Activated CD4-positive, alpha-beta T cell treated with anti-CD3 and anti-CD28 coated beads for 36 hours (primary cell): ENCODE measurements at regions of chr19 and their contacts with region 1.

Region 1: GRCh38 chr19:42219812-42220750 is at the start of gene ZNF526:
- DNase-seq: peak; percentile 98
- ATAC-seq: peak; percentile 83
- H3K4me3 Mint-ChIP-seq: peak within 1 kb of the TSS; percentile 85
- H3K27ac Mint-ChIP-seq: peak within 1 kb of the TSS; percentile 90
- H3K4me1 Mint-ChIP-seq: peaks cover 50% of the 10 kb centered on the region
- H3K27me3 Mint-ChIP-seq: no peaks in the 10 kb centered on the region
- total RNA-seq, gene ZNF526: 11.9 to 15.2 TPM

Region 2: GRCh38 chr19:41883821-41884733 is 336.0 kb before region 1 on chr19:
- CTCF ChIA-PET with region 1: no interaction called
- POLR2A ChIA-PET with region 1: no interaction called
- intact Hi-C with region 1: loop called in 1 of 2 experiments (anchors 10 kb)
- DNase-seq: peak; percentile 94
- ATAC-seq: peak; percentile 75
- H3K4me3 Mint-ChIP-seq: peak overlapping the region; percentile 68
- H3K27ac Mint-ChIP-seq: peak overlapping the region; percentile 96
- H3K4me1 Mint-ChIP-seq: peaks cover 54% of the 10 kb centered on the region
- H3K27me3 Mint-ChIP-seq: no peaks in the 10 kb centered on the region

Region 3: DNA sequence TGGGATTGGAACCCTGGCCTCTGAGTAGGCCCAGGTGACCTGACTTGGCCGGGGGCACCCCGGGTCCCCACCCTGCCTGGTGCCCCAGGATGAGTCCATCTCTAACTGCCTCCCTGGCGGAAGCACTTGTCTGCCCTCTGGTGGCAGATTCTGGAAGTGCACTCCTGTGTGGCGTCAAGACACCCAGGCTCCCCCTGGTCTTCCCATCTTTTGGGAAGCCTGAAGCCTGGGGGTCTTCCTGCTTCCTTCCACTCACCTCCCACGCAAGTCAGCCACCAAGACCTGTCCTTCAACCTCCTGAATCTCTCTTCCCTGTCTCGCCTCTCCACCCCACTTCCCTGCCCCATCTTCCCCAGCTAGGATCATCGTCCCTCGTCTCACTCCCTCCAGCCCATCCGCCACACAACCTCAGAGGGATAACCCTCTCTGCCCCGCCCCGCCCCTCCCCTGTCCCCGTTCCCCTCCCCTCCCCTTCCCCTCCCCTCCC is 268.4 kb before region 1 on chr19:
- CTCF ChIA-PET with region 1: no interaction called
- POLR2A ChIA-PET with region 1: no interaction called
- intact Hi-C with region 1: no loop called
- DNase-seq: peak; percentile 94
- ATAC-seq: peak; percentile 90
- H3K4me3 Mint-ChIP-seq: no peak overlapping the region
- H3K27ac Mint-ChIP-seq: peak overlapping the region; percentile 7
- H3K4me1 Mint-ChIP-seq: peaks cover 15% of the 10 kb centered on the region
- H3K27me3 Mint-ChIP-seq: no peaks in the 10 kb centered on the region

Region 4: GRCh38 chr19:42121656-42122069 is 98.4 kb before region 1 on chr19:
- CTCF ChIA-PET with region 1: no interaction called
- POLR2A ChIA-PET with region 1: no interaction called
- intact Hi-C with region 1: loop called in 1 of 2 experiments (anchors 1 kb)
- DNase-seq: peak; percentile 93
- ATAC-seq: peak; percentile 81
- H3K4me3 Mint-ChIP-seq: peak overlapping the region; percentile 80
- H3K27ac Mint-ChIP-seq: peak overlapping the region; percentile 94
- H3K4me1 Mint-ChIP-seq: peaks cover 57% of the 10 kb centered on the region
- H3K27me3 Mint-ChIP-seq: no peaks in the 10 kb centered on the region

Region 5: GRCh38 chr19:42254989-42255765 is 35.1 kb after region 1 on chr19 and contains the start of gene ERF:
- CTCF ChIA-PET with region 1: no interaction called
- POLR2A ChIA-PET with region 1: no interaction called
- intact Hi-C with region 1: loop called in 1 of 2 experiments (anchors 1 kb)
- DNase-seq: peak; percentile 97
- ATAC-seq: peak; percentile 73
- H3K4me3 Mint-ChIP-seq: peak within 1 kb of the TSS; percentile 70
- H3K27ac Mint-ChIP-seq: peak within 1 kb of the TSS; percentile 63
- H3K4me1 Mint-ChIP-seq: peaks cover 25% of the 10 kb centered on the region
- H3K27me3 Mint-ChIP-seq: peaks cover 3% of the 10 kb centered on the region
- total RNA-seq, gene ERF: 65.5 to 66.4 TPM

Region 6: GRCh38 chr19:42301656-42302203 is 81.6 kb after region 1 on chr19 and contains the start of gene PRR19:
- CTCF ChIA-PET with region 1: interaction called, 4 read pairs
- POLR2A ChIA-PET with region 1: no interaction called
- intact Hi-C with region 1: loop called in 1 of 2 experiments (anchors 1 kb)
- DNase-seq: peak; percentile 50
- ATAC-seq: peak; percentile 25
- H3K4me3 Mint-ChIP-seq: peak within 1 kb of the TSS; percentile 83
- H3K27ac Mint-ChIP-seq: peak within 1 kb of the TSS; percentile 85
- H3K4me1 Mint-ChIP-seq: peaks cover 19% of the 10 kb centered on the region
- H3K27me3 Mint-ChIP-seq: no peaks in the 10 kb centered on the region
- total RNA-seq, gene PRR19: 0.63 to 1.0 TPM

Region 7: DNA sequence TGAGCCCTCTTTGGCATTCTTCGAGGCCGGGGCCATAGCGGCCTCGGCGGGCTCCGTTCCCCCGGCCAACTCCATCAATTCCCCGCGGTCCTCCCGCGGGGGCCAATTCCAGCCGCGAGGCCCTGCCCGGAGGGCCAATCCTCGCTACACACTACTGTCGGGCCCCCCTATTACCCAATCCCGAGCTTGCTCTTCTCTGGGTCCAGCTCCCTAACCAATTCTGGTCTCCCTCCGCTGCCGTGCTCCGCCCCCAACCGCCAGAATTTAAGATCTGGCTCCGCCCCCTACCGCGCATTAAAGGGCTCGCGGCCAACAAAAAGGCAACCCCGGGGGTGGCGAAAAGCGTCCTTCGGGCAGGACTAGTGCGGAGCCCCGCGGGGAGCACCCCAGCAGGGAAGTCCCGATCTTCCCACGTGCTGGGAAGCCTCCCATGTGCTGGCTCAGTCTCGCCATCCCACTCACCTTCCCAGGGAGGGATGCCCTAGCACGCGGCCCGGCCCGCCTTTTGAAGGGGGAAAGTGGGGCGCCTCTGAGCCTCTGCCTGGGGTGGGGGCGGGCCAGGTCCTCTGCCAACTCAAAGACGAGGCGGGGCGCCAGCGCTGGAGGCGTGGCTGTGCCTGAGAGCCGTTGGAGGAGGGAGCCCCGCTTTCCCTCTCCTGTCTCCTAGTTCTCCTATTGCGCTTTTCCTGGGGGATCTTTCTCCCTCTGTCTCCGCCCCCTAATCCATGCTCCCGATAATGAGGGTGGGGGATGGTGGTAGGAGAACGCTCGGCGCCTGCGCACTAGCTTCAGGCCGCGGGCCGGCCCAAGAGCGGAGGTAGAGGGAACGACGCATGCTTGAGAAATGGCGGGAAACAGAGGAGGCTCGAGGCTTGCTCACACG is 203.6 kb after region 1 on chr19:
- CTCF ChIA-PET with region 1: no interaction called
- POLR2A ChIA-PET with region 1: interaction called, 3 read pairs
- intact Hi-C with region 1: loop called in 1 of 2 experiments (anchors 1 kb)
- DNase-seq: peak; percentile 96
- ATAC-seq: peak; percentile 91
- H3K4me3 Mint-ChIP-seq: peak overlapping the region; percentile 86
- H3K27ac Mint-ChIP-seq: peak overlapping the region; percentile 92
- H3K4me1 Mint-ChIP-seq: peaks cover 40% of the 10 kb centered on the region
- H3K27me3 Mint-ChIP-seq: no peaks in the 10 kb centered on the region